Body of pancreas (tissue), 4 donors: ENCODE measurements at regions of chr11 and their contacts with region 1.

Region 1: DNA sequence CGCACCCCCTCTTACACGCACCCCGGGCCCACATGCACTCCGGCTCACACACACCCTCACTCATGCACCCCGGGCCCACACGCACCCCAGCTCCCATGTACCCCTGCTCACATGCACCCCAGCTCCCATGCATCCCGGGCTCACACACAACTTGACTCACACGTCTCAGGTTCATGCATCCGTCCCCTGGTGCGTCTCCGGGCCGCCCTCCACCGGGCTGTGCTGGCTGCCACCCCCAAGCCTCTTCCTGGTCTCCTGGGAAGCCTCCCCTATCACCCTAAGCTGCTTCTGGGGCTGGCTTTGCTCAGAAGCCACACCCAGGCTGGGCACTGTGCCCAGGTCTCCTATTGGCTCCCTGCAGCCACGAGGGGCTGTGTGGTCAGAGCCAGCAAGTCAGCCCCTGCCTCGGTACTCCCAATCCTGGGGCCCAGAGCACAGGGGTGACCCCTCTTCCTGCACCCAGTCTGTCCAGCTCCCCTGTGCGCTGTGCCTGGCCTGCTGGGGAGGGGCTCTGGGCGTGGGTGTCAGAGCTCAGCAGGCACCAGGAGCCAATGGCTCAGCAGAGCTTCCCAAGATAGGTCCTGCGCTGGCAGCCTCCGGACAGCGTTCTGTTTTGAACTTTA is 17.0 kb downstream of the TSPAN4 start:
- DNase-seq: peak; percentile 70 to 86 (median 81)
- ATAC-seq: peak; percentile 67
- H3K4me3 ChIP-seq: no peak overlapping the region
- H3K27ac ChIP-seq: no peak overlapping the region
- H3K4me1 ChIP-seq: peaks cover 12% of the 10 kb centered on the region
- H3K27me3 ChIP-seq: no peaks in the 10 kb centered on the region
- CTCF ChIP-seq: no peak
- POLR2A ChIP-seq: peak in 1 of 3 donors; percentile 8

Region 2: GRCh38 chr11:986294-986959 is 126.8 kb after region 1 on chr11:
- intact Hi-C with region 1: no loop called
- DNase-seq: peak in 1 of 4 donors; percentile 38
- ATAC-seq: no peak
- H3K4me3 ChIP-seq: no peak overlapping the region
- H3K27ac ChIP-seq: no peak overlapping the region
- H3K4me1 ChIP-seq: no peaks in the 10 kb centered on the region
- H3K27me3 ChIP-seq: no peaks in the 10 kb centered on the region
- CTCF ChIP-seq: no peak
- POLR2A ChIP-seq: no peak

Region 3: GRCh38 chr11:1039481-1040427 is 180.1 kb after region 1 on chr11:
- intact Hi-C with region 1: loop called (anchors 5 kb)
- DNase-seq: peak; percentile 69 to 87 (median 74)
- ATAC-seq: peak; percentile 63
- H3K4me3 ChIP-seq: no peak overlapping the region
- H3K27ac ChIP-seq: peak overlapping the region; percentile 77 to 87 (median 86)
- H3K4me1 ChIP-seq: peaks cover 79% of the 10 kb centered on the region
- H3K27me3 ChIP-seq: no peaks in the 10 kb centered on the region
- CTCF ChIP-seq: no peak
- POLR2A ChIP-seq: peak in 2 of 3 donors; percentile 29 to 37

Region 4: DNA sequence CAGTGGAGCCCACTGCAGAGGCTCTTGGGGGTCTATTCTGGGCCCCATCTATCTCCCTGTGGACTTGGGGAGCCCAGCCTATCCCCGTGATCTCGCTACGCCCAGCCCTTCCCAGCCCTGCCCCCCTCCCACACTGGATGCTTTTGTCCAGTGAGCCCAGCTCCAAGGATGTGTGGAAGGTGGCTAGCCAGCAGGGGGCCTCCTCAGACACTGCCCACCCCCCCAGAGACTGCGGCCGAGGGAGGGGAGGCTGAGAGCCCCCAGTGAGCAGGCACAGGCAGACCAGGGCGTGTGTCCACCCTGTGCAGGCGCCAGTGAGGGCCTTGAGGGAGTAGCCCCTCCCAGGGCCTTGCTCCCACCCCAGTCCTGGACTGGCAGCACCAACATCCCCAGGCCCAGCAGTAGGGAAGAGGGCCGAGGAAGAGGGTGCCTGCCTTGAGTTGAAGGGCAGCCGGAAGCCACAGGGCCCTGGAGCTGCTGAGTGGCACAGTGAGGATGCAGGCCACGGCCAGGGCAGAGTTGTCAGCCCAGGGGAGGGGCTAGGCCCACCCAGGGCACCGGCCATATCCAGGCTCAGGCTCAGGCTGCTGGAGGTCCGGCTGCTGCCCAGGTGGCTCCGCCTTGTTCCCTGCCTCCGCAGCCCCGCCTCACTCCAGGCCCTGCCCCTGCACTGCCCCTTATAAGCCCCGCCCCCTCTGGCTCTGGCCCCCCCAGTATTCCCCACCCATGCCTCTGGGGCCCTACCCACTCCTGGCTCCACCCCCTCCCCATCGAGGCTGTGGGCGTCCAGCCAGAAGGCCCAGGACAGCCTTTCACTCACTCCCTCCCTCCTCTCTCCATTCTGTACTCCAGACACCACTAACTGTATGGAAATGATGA is 599.0 kb after region 1 on chr11:
- intact Hi-C with region 1: loop called (anchors 10 kb)
- DNase-seq: peak; percentile 51 to 67 (median 60)
- ATAC-seq: peak; percentile 26
- H3K4me3 ChIP-seq: no peak overlapping the region
- H3K27ac ChIP-seq: no peak overlapping the region
- H3K4me1 ChIP-seq: peaks cover 7% of the 10 kb centered on the region
- H3K27me3 ChIP-seq: no peaks in the 10 kb centered on the region
- CTCF ChIP-seq: no peak
- POLR2A ChIP-seq: no peak